ENCODE measurements at regions of chr5 and their contacts with region 1.

Region 1: GRCh38 chr5:110054240-110054639 is 364.5 kb downstream of the MAN2A1 start:
- DNase-seq: peak; percentile 46 to 95 (median 71)
- ATAC-seq: peak; percentile 93
- H3K4me3 ChIP-seq: no peak overlapping the region
- H3K4me3 Mint-ChIP-seq: peak overlapping the region; percentile 24
- H3K27ac ChIP-seq: peak overlapping the region in 1 of 2 experiments; percentile 44
- H3K27ac Mint-ChIP-seq: peak overlapping the region; percentile 85
- H3K4me1 ChIP-seq: peaks cover 29% of the 10 kb centered on the region
- H3K4me1 Mint-ChIP-seq: peaks cover 43% of the 10 kb centered on the region
- H3K27me3 ChIP-seq: no peaks in the 10 kb centered on the region
- H3K27me3 Mint-ChIP-seq: no peaks in the 10 kb centered on the region
- CTCF ChIP-seq: peak; percentile 62

Region 2: GRCh38 chr5:109819878-109820277 is 234.4 kb before region 1 on chr5:
- CTCF ChIA-PET with region 1: interaction called, 3 read pairs
- POLR2A ChIA-PET with region 1: no interaction called
- intact Hi-C with region 1: loop called in 1 of 2 experiments (anchors 10 kb)
- DNase-seq: peak in 2 of 9 experiments; percentile 10 to 19
- ATAC-seq: no peak
- H3K4me3 ChIP-seq: no peak overlapping the region
- H3K4me3 Mint-ChIP-seq: no peak overlapping the region
- H3K27ac ChIP-seq: no peak overlapping the region
- H3K27ac Mint-ChIP-seq: no peak overlapping the region
- H3K4me1 ChIP-seq: no peaks in the 10 kb centered on the region
- H3K4me1 Mint-ChIP-seq: peaks cover 4% of the 10 kb centered on the region
- H3K27me3 ChIP-seq: no peaks in the 10 kb centered on the region
- H3K27me3 Mint-ChIP-seq: no peaks in the 10 kb centered on the region
- CTCF ChIP-seq: no peak

Measured in CD8-positive, alpha-beta T cell (primary cell).